ENCODE measurements at regions of chr20 and their contacts with region 1.

Region 1: DNA sequence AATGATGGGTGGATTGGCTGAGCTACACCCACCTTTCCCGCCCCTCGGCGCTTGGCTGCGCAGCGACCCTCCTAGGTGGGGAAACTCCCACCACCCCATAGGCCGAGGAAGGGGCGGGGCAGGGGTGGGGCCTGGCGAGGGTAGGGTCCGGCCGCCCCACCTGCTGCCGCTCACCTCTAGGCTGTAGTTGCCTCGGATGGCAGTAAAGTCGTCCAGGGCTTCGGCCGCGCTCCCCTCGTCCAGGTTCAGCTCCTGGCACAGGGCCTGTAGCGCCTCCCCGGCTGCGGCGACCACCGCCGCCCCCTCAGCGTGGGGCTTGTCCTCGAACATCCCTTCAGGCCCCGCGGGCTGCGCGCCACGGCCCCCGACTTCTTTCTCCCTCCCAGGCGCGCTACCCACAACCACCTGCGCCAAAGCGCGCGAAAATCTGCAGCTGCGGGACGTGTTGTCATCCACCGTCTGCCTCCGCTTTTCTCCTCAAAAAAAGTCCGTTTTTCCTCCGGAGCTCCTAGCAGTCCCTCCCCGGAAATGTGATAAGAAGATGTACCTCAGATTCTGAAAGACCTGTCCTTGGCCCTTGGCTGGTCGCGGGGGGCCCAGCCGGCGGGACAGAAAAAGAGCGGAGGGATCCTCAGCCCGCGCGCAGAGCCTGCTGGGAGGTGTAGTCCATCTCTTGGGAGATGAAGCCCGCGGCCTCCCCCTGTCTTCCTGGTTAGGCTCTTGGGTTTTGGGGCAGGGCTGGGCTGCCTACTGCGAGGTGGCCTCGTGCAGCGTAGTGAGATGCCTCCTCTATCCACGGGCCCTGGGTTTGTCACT is at the start of gene RBL1:
- DNase-seq: peak; percentile 91
- ATAC-seq: peak; percentile 92
- total RNA-seq, gene RBL1: 5.3 TPM

Region 2: GRCh38 chr20:37178839-37179670 is 83.2 kb after region 1 on chr20 and contains the starts of genes MROH8 and RPN2:
- intact Hi-C with region 1: loop called (anchors 10 kb)
- DNase-seq: peak; percentile 99
- ATAC-seq: peak; percentile 99
- total RNA-seq, gene MROH8: 3.7 TPM
- total RNA-seq, gene RPN2: 100 TPM

Region 3: DNA sequence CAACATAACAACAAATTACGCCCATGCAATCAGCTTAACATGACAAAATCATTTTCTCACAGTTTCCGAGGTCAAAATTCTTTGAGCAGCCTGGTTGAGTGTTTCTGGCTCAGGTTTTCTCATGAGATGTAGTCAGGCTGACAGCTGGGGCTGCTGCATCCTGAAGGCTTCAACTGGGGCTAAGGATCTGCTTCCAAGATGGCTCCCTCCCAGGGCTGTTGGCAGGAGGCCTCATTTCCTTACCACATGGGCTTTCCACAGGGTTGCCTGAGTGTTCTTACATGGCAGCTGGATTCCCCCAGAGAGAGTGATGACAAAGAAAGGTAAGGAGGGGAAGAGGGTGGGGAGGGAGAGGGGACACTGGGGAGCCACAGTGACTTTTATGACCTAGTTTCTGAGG is 362.1 kb after region 1 on chr20:
- intact Hi-C with region 1: no loop called
- DNase-seq: no peak
- ATAC-seq: no peak

Measured in Right ventricle myocardium inferior (tissue), 1 donor.